Naive thymus-derived CD4-positive, alpha-beta T cell (primary cell): ENCODE measurements at regions of chr17 and their contacts with region 1.

Region 1: DNA sequence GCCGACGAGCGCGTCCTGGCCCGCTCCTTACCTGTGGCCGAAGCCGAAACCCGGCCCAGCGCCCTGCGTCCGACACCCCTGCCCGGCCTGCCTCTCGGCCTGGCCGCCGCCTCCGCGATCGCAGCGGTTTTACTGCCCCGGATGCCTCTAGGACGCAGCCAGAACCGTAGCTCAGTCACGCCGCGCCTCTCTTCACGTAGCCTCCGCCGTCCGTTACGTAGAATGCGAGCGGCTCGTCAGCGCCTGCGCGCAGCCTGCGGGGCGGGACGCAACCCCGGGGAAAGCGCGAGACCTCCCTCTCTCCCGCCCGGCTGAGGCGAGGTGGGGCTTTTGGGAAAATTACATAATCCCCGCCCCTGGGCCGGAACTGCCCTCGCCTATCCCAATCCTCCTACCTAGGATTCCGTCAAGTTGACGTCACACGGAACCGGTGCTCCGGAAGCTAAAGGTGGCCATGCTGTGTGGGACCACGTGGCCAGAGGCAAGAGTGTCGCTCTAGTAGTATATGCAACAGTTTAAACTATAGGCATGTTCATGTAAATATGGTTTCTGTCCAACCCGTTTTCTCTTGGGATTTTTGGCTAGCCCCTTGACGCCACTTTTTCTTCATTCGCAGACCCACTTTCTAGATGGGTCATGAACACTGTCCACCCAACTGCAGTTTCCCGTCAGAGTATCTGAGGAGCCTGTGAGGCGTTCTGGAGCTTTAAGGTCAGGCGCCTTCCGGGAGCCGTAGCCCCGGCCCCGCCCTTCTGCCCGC is at the start of gene CCDC47:
- DNase-seq: peak; percentile 92 to 99 (median 99)
- ATAC-seq: peak; percentile 88
- H3K4me3 ChIP-seq: peak within 1 kb of the TSS; percentile 85
- H3K4me3 Mint-ChIP-seq: peak within 1 kb of the TSS; percentile 91 to 99 (median 98)
- H3K27ac ChIP-seq: peak within 1 kb of the TSS; percentile 100
- H3K27ac Mint-ChIP-seq: peak within 1 kb of the TSS; percentile 97 to 100 (median 99)
- H3K4me1 ChIP-seq: peaks cover 21 to 46% of the 10 kb centered on the region in 2 donors
- H3K4me1 Mint-ChIP-seq: peaks cover 31 to 84% (median 62%) of the 10 kb centered on the region in 7 donors
- H3K27me3 ChIP-seq: no peaks in the 10 kb centered on the region
- H3K27me3 Mint-ChIP-seq: peaks cover 0 to 7% (median 0%) of the 10 kb centered on the region in 5 donors
- total RNA-seq, gene CCDC47: 31.8 to 62.9 (median 34.7) TPM

Region 2: GRCh38 chr17:63792055-63792725 is 18.6 kb after region 1 on chr17:
- CTCF ChIA-PET with region 1: no interaction called
- POLR2A ChIA-PET with region 1: interaction called, 6 read pairs
- intact Hi-C with region 1: loop called in 1 of 2 experiments (anchors 2 kb)
- DNase-seq: no peak
- ATAC-seq: no peak
- H3K4me3 ChIP-seq: no peak overlapping the region
- H3K4me3 Mint-ChIP-seq: no peak overlapping the region
- H3K27ac ChIP-seq: no peak overlapping the region
- H3K27ac Mint-ChIP-seq: peak overlapping the region in 2 of 9 donors; percentile 11 to 74
- H3K4me1 ChIP-seq: no peaks in the 10 kb centered on the region
- H3K4me1 Mint-ChIP-seq: peaks cover 0 to 19% (median 9%) of the 10 kb centered on the region in 7 donors
- H3K27me3 ChIP-seq: no peaks in the 10 kb centered on the region
- H3K27me3 Mint-ChIP-seq: no peaks in the 10 kb centered on the region

Region 3: DNA sequence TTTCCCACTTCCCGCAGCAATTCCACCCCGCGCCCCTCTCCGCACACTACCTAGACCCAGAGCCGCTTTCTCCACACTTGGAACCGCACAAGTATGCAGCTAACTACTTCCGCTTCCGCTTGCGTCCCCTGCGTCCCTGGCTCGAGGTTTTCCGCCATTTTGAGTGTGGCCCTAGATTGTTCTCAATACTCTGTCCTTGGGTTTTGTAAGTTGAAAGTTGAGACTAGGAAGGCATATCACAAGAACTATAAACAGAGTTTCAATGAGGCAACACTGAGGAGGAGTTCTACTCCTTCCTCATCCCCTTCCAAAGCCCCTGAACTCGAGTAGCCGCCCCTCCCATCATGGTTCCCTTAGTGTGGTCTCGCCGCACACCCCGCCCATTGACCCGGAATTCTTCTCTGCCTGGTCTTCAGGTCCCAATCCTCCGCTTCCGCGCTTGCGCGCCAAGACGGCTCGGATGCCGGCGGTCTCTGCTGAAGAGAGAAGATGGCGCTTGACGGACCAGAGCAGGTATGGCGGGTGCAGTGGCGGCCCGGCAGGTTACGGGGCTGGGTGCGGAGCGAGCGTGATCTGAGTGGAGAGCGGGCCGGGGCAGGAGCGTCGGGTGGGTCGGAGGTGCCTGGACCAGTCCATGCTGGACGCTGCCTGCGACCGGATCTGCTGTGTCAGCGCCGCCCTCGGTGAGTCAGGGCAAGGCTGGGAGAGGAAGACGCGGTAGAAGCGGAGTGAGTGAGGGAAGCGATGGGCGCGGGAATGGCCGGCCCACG is 53.6 kb after region 1 on chr17 and contains the starts of genes FTSJ3 and PSMC5:
- CTCF ChIA-PET with region 1: interaction called, 3 read pairs
- POLR2A ChIA-PET with region 1: interaction called, 16 read pairs
- intact Hi-C with region 1: loop called (anchors 1 kb)
- DNase-seq: peak; percentile 89 to 98 (median 96)
- ATAC-seq: peak; percentile 97
- H3K4me3 ChIP-seq: peak within 1 kb of the TSS; percentile 89
- H3K4me3 Mint-ChIP-seq: peak within 1 kb of the TSS; percentile 93 to 100 (median 98)
- H3K27ac ChIP-seq: peak within 1 kb of the TSS; percentile 87
- H3K27ac Mint-ChIP-seq: peak within 1 kb of the TSS; percentile 98 to 100 (median 99)
- H3K4me1 ChIP-seq: peaks cover 27 to 46% of the 10 kb centered on the region in 2 donors
- H3K4me1 Mint-ChIP-seq: peaks cover 43 to 82% (median 77%) of the 10 kb centered on the region in 7 donors
- H3K27me3 ChIP-seq: no peaks in the 10 kb centered on the region
- H3K27me3 Mint-ChIP-seq: no peaks in the 10 kb centered on the region
- total RNA-seq, gene FTSJ3: 38.1 to 66.2 (median 55.8) TPM
- total RNA-seq, gene PSMC5: 68.4 to 153 (median 105) TPM

Region 4: DNA sequence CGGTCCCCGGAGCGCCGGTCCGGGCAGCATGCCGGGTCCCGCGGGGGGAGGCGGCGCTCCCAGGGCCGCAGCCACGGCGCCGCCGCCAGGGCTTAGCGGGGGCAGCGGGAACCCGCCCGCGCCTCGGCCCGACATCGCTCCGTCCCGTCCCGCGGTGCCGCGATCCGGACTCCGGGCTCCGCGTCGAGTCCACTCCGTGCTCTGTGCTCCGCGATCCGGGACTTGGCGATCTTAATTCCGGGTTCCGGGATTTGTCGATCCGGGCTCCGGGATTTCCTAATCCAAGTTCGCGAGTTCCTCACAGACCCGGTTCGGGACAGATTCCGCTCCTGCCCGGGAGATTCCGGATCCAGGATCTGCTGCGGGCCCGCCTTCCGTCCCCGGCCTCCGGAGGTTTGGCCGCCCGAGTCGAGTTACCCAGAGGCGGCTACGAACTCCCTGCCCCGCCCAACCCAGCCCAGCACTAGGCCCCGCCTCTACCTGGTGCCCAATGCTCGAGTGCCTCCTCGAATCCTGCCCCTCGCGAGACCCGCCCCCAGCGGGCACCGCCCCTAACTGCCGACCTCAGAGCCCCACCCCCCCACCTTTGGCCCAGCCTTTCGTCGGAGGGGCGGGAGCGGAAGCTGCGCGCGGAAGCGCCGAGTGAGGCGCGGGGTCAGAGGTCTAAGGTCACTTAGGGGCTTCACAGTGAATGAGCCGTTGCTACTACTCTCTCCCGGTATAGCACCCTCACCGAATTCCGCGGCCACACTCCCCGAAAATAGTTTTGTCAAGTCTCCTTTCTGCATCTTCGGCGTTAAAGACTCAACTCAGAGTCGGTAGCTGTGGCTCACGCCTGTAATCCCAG is 69.2 kb after region 1 on chr17 and contains the start of gene SMARCD2:
- CTCF ChIA-PET with region 1: no interaction called
- POLR2A ChIA-PET with region 1: interaction called, 23 read pairs
- intact Hi-C with region 1: loop called (anchors 1 kb)
- DNase-seq: peak; percentile 94 to 99 (median 98)
- ATAC-seq: peak; percentile 96
- H3K4me3 ChIP-seq: peak within 1 kb of the TSS; percentile 87
- H3K4me3 Mint-ChIP-seq: peak within 1 kb of the TSS; percentile 92 to 98 (median 95)
- H3K27ac ChIP-seq: peak within 1 kb of the TSS; percentile 96
- H3K27ac Mint-ChIP-seq: peak within 1 kb of the TSS; percentile 87 to 95 (median 92)
- H3K4me1 ChIP-seq: peaks cover 34 to 36% of the 10 kb centered on the region in 2 donors
- H3K4me1 Mint-ChIP-seq: peaks cover 27 to 52% (median 44%) of the 10 kb centered on the region in 7 donors
- H3K27me3 ChIP-seq: no peaks in the 10 kb centered on the region
- H3K27me3 Mint-ChIP-seq: no peaks in the 10 kb centered on the region
- total RNA-seq, gene SMARCD2: 102 to 148 (median 109) TPM